Activated T-helper 1 cell treated with anti-CD3 and anti-CD28 coated beads, Interleukin-12 subunit alpha, Interleukin-12 subunit beta, Interleukin-2, Interleukin-4 antibody, amounts not matched to agents 30 ng/mL and 10 ng/mL and 1 ng/mL, durations not matched to agents 14 hours and 24 hours and 36 hours (primary cell): ENCODE measurements at regions of chr11 and their contacts with region 1.

Region 1: GRCh38 chr11:59753650-59754493 is 1.3 kb upstream of the STX3 start:
- DNase-seq: peak; percentile 77
- H3K4me3 Mint-ChIP-seq: peak overlapping the region; percentile 95
- H3K27ac Mint-ChIP-seq: peak overlapping the region; percentile 82
- H3K4me1 Mint-ChIP-seq: peaks cover 36% of the 10 kb centered on the region
- H3K27me3 Mint-ChIP-seq: peaks cover 7% of the 10 kb centered on the region

Region 2: DNA sequence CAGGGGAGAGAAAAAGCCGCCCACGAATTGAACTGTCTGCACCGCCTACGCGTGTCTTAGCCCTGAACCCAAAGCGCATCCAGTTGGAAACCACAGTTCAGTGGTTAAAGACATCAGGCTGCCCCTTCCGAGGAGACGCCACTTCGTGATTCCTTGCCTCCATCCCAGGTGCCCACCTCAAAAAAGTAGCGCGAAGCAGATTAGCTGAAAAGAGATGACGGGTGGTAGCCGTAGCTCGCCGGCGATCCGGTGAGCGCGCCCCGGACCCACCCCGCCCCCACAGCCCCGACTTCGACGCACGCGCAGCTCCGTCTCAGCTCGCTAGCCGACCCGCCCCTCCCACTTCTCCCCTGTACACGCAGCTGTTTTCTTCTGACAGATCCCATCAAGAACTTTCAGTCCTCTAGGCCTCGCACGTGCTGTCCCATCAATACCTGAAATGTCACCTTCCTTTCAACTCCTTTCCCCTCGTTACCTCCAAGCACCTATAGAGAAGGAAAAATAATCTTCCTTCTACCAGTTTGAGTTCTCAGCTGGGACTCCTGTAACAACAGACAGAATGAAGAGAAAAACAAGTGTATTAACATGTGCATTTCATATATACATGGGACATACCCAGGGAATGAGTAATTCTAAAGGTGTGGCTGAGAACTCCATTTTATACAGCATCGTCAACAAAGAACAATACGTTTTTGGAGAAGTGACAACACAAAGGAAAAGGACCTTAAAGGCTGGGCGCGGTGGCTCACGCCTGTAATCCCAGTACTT is 193.0 kb before region 1 on chr11:
- intact Hi-C with region 1: loop called (anchors 2 kb)
- DNase-seq: peak; percentile 54
- H3K4me3 Mint-ChIP-seq: peak overlapping the region; percentile 92
- H3K27ac Mint-ChIP-seq: peak overlapping the region; percentile 98
- H3K4me1 Mint-ChIP-seq: peaks cover 48% of the 10 kb centered on the region
- H3K27me3 Mint-ChIP-seq: peaks cover 10% of the 10 kb centered on the region

Region 3: GRCh38 chr11:59668950-59669610 is 84.8 kb before region 1 on chr11 and contains the start of gene PATL1:
- intact Hi-C with region 1: loop called (anchors 1 kb)
- DNase-seq: peak; percentile 98
- H3K4me3 Mint-ChIP-seq: peak within 1 kb of the TSS; percentile 94
- H3K27ac Mint-ChIP-seq: peak within 1 kb of the TSS; percentile 97
- H3K4me1 Mint-ChIP-seq: peaks cover 46% of the 10 kb centered on the region
- H3K27me3 Mint-ChIP-seq: peaks cover 2% of the 10 kb centered on the region
- total RNA-seq, gene PATL1: 68.7 and 74.0 TPM in 2 replicates

Region 4: DNA sequence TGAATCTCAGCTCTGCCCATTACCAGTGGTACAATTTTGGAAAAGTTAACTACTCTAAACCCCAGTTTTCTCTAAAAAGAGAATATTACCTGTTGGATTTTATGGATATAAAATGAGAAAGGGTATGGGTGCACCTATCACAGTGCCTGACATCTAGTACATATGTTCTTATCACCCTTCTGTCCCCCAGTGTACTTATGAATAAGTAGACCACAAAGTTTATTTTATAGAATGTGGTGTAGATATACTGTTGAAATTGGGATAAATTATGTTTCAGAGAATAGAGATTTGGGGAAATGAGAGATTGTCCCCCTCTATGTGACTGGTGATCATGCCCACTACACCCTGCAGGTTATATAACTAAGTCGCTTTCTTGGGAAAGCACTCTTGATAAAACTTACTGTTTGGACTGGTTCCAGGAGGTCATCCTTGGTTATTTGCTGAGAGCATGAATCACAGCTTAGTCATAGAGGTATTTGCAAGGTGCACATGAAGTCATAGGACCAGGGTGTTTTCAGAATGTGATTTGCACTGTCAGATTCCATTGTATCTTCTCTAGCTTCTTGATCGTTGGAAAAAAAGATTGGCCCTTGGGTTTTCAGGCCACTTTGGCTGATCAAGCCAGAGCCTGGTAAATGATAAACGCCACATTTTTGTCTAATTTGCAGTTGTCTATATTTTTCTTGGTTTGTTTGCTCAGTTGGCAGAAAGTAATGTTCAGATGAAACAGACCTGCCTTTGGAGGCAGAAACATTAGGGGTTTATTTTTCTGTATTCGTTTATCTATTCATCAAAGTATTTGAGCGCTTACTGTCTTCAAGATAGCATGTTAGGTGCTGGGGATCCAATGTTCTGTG is 22.6 kb after region 1 on chr11:
- intact Hi-C with region 1: loop called (anchors 2 kb)
- DNase-seq: no peak
- H3K4me3 Mint-ChIP-seq: peak overlapping the region; percentile 23
- H3K27ac Mint-ChIP-seq: peak overlapping the region; percentile 50
- H3K4me1 Mint-ChIP-seq: peaks cover 68% of the 10 kb centered on the region
- H3K27me3 Mint-ChIP-seq: no peaks in the 10 kb centered on the region

Region 5: GRCh38 chr11:59802639-59803176 is 48.8 kb after region 1 on chr11:
- intact Hi-C with region 1: loop called (anchors 1 kb)
- DNase-seq: peak; percentile 50
- H3K4me3 Mint-ChIP-seq: no peak overlapping the region
- H3K27ac Mint-ChIP-seq: no peak overlapping the region
- H3K4me1 Mint-ChIP-seq: peaks cover 24% of the 10 kb centered on the region
- H3K27me3 Mint-ChIP-seq: no peaks in the 10 kb centered on the region

Region 6: GRCh38 chr11:59857444-59858434 is 103.9 kb after region 1 on chr11:
- intact Hi-C with region 1: loop called (anchors 5 kb)
- DNase-seq: no peak
- H3K4me3 Mint-ChIP-seq: no peak overlapping the region
- H3K27ac Mint-ChIP-seq: peak overlapping the region; percentile 80
- H3K4me1 Mint-ChIP-seq: peaks cover 29% of the 10 kb centered on the region
- H3K27me3 Mint-ChIP-seq: peaks cover 22% of the 10 kb centered on the region